CD4-positive, alpha-beta memory T cell (primary cell): ENCODE measurements at regions of chr7 and their contacts with region 1.

Region 1: DNA sequence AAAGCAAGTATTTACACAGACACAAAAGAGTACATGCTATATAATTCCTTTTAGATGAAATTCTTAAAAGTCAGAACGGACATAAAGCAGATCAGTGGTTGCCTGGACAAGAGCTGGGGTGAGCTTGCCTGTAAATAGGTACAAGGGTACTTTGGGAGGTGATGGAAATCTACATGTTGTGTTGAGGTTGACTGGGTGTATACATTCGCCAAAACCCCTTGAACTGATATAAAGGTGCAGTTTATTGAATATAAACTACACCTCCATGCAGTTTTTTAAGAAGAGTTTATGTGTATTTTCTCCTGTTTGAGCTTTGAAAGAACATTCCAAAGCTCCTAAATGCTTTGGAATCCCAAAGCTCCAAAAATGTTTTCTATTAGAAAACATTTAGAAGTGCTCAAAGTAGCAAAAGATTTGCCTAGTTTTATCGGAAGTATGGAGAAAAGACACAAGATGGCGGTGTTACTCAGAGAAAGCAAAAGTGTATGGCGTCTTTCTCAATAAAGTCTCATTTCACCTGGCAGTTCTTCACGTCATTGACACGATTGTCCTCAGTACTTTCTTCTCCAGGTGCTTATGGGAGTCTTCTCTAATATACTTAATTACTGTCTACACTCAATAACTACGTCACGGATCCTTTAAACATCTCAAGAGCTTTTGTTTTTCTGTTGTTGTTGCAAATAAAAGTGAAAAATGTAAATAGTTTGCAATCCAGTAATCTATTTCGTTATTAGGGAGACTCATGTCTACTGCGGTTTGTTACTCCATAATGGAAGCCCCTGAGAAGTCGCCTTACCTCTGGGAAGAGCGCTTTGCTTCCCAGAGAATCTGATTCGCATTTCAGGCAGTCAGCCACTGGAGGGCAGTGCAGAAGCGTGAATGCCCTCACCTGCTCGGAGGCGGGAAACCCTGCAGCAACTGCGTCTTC is 14.7 kb upstream of the SEC61G start:
- DNase-seq: peak; percentile 46 to 60 (median 53)
- H3K4me3 ChIP-seq: peak overlapping the region in 1 of 2 donors; percentile 36
- H3K4me3 Mint-ChIP-seq: peak overlapping the region; percentile 74 to 87 (median 78)
- H3K27ac ChIP-seq: peak overlapping the region; percentile 18
- H3K27ac Mint-ChIP-seq: peak overlapping the region in 6 of 7 donors; percentile 22 to 83 (median 76)
- H3K4me1 ChIP-seq: peaks cover 10% of the 10 kb centered on the region
- H3K4me1 Mint-ChIP-seq: peaks cover 0 to 13% (median 3%) of the 10 kb centered on the region in 4 donors
- H3K27me3 ChIP-seq: peaks cover 6% of the 10 kb centered on the region
- H3K27me3 Mint-ChIP-seq: peaks cover 9 to 10% of the 10 kb centered on the region in 2 donors

Region 2: DNA sequence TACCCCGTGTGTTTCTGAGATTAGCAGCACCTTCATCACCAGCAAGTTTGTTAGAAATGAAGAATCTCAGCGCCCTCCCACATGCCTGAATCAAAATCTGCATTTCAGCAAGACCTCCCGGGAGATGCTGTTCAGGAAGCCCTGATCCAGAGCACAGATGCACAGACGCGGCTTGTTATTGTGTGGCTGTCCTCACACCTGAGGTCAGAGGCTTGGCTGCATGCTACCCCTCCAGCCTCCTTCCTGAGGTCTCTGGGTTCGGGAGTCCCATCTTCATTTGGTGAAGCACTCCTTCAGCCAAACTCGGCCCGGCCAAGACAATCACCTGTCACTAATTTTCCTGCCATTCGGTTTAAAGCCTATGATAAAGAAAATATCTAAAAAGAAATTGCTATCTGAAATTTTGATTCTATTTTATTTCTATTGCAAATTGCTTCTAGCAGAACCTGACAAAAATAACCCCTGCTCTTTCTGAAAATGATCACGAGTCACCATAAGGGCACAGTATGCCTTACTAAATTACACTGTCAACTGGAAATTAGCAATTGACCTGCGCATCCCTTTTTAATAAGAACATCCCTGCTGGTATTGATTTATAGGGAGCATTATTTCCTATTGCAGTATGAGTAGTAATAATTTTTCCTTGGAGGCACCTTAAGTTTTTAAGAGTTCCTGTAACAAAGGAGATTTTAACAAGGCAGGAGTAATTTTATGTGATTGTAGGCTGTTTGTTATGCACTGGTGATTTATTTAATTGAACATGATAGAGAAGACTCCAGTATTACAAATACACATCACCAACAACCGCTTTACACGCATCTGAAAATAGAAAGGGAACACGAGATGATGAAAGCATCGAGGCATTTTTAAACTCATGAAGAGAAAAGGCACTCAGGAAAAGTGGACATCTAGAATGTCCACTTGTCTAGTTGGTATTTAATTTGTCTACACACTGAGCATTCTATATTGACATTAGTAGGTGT is 182.0 kb before region 1 on chr7:
- CTCF ChIA-PET with region 1: no interaction called
- POLR2A ChIA-PET with region 1: no interaction called
- intact Hi-C with region 1: no loop called
- DNase-seq: no peak
- H3K4me3 ChIP-seq: no peak overlapping the region
- H3K4me3 Mint-ChIP-seq: no peak overlapping the region
- H3K27ac ChIP-seq: no peak overlapping the region
- H3K27ac Mint-ChIP-seq: no peak overlapping the region
- H3K4me1 ChIP-seq: no peaks in the 10 kb centered on the region
- H3K4me1 Mint-ChIP-seq: no peaks in the 10 kb centered on the region
- H3K27me3 ChIP-seq: no peaks in the 10 kb centered on the region
- H3K27me3 Mint-ChIP-seq: no peaks in the 10 kb centered on the region

Region 3: GRCh38 chr7:54758702-54759592 is 14.8 kb before region 1 on chr7 and contains the start of gene SEC61G:
- CTCF ChIA-PET with region 1: interaction called, 71 read pairs
- POLR2A ChIA-PET with region 1: interaction called, 19 read pairs
- intact Hi-C with region 1: no loop called
- DNase-seq: peak; percentile 95 to 96 (median 95)
- H3K4me3 ChIP-seq: peak within 1 kb of the TSS; percentile 62 to 97
- H3K4me3 Mint-ChIP-seq: peak within 1 kb of the TSS; percentile 99 to 100 (median 100)
- H3K27ac ChIP-seq: peak within 1 kb of the TSS; percentile 81
- H3K27ac Mint-ChIP-seq: peak within 1 kb of the TSS; percentile 95 to 99 (median 98)
- H3K4me1 ChIP-seq: peaks cover 22% of the 10 kb centered on the region
- H3K4me1 Mint-ChIP-seq: peaks cover 15 to 51% (median 32%) of the 10 kb centered on the region in 4 donors
- H3K27me3 ChIP-seq: no peaks in the 10 kb centered on the region
- H3K27me3 Mint-ChIP-seq: no peaks in the 10 kb centered on the region
- total RNA-seq, gene SEC61G: 67.0 to 73.9 TPM

Region 4: DNA sequence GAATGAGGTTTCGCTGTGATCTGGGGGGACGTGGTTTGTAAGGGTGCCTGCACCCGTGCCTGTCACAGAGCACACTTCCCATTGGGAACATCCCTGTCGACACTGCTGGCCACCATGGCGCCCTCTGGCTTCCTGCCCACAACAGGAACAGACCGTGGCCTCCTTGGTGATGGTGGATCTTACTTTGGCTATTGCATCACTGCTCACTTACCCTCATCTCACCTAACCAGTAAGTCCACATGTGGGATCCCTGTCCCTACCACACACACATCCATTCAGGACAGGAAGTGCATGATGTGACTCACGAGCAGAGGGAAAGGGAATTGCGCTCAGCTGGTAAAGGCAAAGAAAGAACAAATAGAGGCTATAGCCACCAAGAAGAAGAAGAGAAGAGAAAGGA is 11.5 kb after region 1 on chr7:
- CTCF ChIA-PET with region 1: interaction called, 13 read pairs
- POLR2A ChIA-PET with region 1: no interaction called
- intact Hi-C with region 1: no loop called
- DNase-seq: no peak
- H3K4me3 ChIP-seq: no peak overlapping the region
- H3K4me3 Mint-ChIP-seq: no peak overlapping the region
- H3K27ac ChIP-seq: no peak overlapping the region
- H3K27ac Mint-ChIP-seq: no peak overlapping the region
- H3K4me1 ChIP-seq: peaks cover 6% of the 10 kb centered on the region
- H3K4me1 Mint-ChIP-seq: peaks cover 4 to 6% (median 5%) of the 10 kb centered on the region in 4 donors
- H3K27me3 ChIP-seq: peaks cover 5% of the 10 kb centered on the region
- H3K27me3 Mint-ChIP-seq: peaks cover 22 to 29% of the 10 kb centered on the region in 2 donors

Region 5: GRCh38 chr7:54841772-54842697 is 68.3 kb after region 1 on chr7:
- CTCF ChIA-PET with region 1: interaction called, 4 read pairs
- POLR2A ChIA-PET with region 1: no interaction called
- intact Hi-C with region 1: loop called (anchors 1 kb)
- DNase-seq: no peak
- H3K4me3 ChIP-seq: no peak overlapping the region
- H3K4me3 Mint-ChIP-seq: no peak overlapping the region
- H3K27ac ChIP-seq: no peak overlapping the region
- H3K27ac Mint-ChIP-seq: no peak overlapping the region
- H3K4me1 ChIP-seq: no peaks in the 10 kb centered on the region
- H3K4me1 Mint-ChIP-seq: peaks cover 0 to 5% (median 0%) of the 10 kb centered on the region in 4 donors
- H3K27me3 ChIP-seq: no peaks in the 10 kb centered on the region
- H3K27me3 Mint-ChIP-seq: peaks cover under 1 to 8% of the 10 kb centered on the region in 2 donors

Region 6: DNA sequence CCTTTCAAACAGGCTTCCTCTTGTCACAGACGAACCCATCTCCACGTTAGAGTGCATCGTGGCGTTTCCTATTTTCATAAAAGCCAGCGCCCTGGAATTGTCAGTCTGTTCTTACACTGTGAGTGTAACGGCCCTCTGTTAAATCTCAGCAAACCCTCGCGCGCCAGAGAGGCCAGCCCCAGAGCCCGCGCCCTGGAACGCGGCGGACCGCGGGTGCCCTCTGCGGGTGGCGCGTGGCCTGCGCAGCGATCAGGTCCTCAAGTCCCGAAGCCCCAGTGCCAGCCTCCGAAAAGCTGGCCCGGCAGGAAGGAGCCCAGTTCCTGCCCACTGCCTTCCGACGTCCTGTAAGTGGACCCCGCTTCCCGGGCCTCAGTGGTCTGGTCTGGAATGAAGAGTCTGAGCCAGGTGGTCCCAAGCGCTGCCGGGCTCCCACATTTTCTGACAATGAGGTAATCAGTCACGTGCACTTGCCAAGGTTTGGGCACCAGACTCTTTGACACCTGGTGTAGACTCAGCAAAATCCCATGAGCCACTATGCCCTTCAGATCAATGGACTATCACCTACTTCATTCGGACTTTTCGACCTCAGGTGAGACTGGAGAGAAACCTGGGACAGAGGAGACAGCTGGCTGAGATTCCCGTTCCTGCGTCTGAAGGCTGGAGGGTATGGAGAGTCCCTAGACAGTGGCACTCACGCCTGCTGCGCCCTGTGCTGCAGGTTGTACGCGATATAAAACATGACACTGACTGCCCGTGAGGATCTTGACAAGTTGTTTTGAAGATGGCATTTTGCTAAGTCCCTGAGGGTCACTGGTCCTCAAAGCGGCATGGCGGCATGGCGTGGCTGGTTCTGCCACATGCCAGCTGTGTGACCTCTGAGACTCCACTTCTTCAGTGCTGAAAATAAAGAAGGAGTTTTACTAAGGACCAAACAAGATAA is 482.0 kb after region 1 on chr7:
- CTCF ChIA-PET with region 1: interaction called, 188 read pairs
- POLR2A ChIA-PET with region 1: interaction called, 5 read pairs
- intact Hi-C with region 1: loop called (anchors 1 kb)
- DNase-seq: peak; percentile 54 to 67 (median 65)
- H3K4me3 ChIP-seq: peak overlapping the region; percentile 66 to 73
- H3K4me3 Mint-ChIP-seq: peak overlapping the region; percentile 81 to 94 (median 90)
- H3K27ac ChIP-seq: no peak overlapping the region
- H3K27ac Mint-ChIP-seq: peak overlapping the region in 5 of 7 donors; percentile 21 to 77 (median 63)
- H3K4me1 ChIP-seq: peaks cover 14% of the 10 kb centered on the region
- H3K4me1 Mint-ChIP-seq: peaks cover 5 to 18% (median 13%) of the 10 kb centered on the region in 4 donors
- H3K27me3 ChIP-seq: peaks cover 8% of the 10 kb centered on the region
- H3K27me3 Mint-ChIP-seq: peaks cover 26 to 50% of the 10 kb centered on the region in 2 donors